ENCODE measurements at regions of chr20 and their contacts with region 1.

Region 1: DNA sequence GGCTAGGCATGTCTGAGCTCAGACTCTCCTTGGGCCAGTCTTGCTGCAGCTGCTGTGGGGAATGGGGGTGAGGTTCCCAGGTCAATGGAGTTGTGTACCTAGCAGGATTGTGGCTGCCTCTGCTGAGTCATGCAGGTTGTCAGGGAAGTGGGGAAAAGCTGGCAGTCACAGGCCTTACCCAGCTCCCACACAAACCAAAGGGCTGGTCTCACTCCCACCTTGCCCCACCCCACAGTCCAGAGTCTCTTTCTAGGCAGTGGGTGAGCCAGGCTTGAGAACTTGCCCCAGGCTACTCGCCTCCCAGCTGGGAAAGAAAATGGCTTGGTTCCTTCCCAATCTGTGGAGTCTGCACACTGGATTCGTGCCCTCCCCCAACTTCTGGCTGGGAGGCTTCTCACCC is 65.7 kb downstream of the SCP2D1 start:
- DNase-seq: no peak
- CTCF ChIP-seq: no peak

Region 2: DNA sequence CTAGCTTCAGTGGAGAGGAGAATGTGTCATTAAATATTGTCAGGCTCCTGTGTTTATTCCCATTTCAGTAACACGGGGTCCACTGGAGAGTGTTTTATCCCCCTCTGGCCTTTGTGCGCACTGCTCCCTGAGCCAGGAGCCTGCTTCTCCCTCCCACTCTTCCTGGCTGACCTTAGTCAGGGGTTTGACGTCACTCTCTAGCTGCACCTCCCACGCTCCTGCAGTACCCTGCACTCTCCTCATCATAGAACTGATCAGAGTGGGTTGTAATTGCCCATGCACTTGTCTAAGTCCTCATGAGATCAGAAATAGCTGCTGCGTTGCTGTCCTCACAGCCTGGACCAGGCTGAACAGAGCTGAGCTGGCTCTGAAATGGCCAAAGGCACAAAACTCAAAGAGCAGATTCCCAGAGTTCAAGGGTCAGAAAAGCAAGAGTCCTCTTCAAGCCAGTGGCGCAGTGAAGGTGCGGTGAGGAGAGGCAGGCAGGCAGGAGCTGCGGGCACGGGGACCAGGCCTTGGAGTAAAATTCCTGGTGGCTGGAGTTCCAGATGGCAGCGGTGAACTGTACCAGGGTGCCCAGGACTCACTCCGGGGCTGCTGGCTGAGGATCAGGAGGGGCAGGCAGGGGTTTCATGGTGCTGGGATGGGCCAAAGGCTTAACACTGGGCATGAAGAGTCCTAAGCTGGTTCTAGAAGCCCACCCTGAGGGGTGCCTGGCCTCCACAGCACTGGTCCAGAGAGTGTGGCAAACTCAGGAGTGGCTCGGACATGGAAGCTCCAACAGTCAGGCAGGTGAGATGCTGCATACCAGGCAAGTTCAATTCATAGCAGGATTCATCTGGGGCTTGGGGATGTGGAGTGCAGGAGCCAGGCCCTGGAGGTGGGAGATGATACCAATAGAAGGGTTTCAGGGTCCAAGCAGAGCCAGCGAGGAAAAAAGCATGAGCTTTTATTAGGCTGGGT is 105.3 kb after region 1 on chr20:
- in situ Hi-C with region 1: loop called (anchors 25 kb)
- DNase-seq: no peak
- CTCF ChIP-seq: no peak